Mucosa of descending colon (tissue), 3 donors: ENCODE measurements at regions of chrX and their contacts with region 1.

Region 1: DNA sequence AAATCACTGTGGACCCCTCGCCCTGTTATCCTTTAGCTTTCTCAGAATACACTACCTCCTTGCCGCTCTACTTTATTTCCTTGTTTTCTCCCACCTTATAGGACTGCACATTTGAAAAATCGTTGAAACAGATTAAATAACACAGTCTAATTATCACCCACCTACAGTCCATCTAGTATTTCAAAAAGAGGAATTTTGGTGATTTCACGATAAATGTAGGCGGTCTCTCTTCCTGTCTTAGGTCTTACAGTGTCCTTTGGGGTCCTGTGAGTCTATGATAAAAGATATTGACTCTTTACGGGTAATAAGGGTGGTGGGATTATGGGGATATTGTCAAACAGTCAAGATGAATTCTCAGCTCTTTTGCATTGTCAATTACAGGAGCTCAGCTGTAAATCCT is 2.4 kb upstream of the TBL1X start:
- DNase-seq: no peak
- ATAC-seq: no peak
- H3K4me3 ChIP-seq: no peak overlapping the region
- H3K4me1 ChIP-seq: no peaks in the 10 kb centered on the region
- CTCF ChIP-seq: no peak

Region 2: DNA sequence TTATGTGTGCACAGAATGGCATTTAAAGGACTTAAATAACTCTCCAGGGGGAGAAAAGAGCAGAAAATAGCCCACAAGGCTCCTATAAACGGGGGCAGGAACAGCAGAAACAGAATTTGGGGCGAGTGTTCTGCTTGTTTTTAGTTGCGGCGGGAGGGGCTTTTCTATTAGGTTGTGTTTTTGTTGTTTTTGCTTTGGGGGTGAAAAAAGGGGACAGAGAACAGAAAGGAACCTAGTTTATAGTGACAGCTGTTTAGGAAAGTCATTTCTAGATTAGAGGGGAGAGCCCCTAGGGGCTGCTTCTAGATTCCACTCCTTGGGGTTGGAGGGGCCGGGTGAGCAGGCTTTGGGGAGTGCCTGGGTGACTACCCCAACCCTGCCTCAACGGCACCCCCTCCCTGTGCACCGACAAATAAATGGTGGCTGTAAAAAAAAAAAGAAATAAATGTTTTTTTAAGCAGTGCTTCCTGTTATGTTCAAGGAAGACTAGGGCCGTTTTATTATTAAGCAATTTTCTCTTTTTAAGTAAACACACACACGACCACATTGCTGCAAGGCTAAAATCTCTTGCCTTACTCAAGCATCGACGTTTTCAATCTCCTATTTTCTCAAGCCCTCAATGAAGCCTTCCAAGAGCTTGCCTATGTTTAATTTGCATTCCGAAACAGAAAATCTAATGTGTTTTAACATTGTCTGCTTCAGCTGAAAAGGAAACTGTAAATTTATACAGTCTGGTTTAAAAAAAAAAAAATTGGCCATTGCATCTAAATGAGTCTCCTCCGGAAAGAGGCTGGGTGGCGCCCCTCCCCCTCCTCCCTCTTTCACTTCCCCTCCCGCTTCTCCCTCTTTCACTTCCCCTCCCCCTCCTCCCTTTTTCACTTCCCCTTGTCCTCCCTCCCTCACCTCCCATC is 120.9 kb before region 1 on chrX:
- intact Hi-C with region 1: loop called in 1 of 2 experiments (anchors 2 kb)
- DNase-seq: peak; percentile 66 to 90 (median 76)
- ATAC-seq: peak; percentile 60
- H3K4me3 ChIP-seq: no peak overlapping the region
- H3K4me1 ChIP-seq: peaks cover 7% of the 10 kb centered on the region
- CTCF ChIP-seq: no peak